ENCODE measurements at regions of chr19 and their contacts with region 1.

Region 1: GRCh38 chr19:51887522-51888498 is at the start of gene ZNF577:
- DNase-seq: peak; percentile 81 to 86
- ATAC-seq: peak; percentile 98
- H3K4me3 ChIP-seq: peak within 1 kb of the TSS; percentile 59 to 95 (median 84)
- H3K27ac ChIP-seq: peak within 1 kb of the TSS; percentile 70 to 87 (median 82)
- H3K4me1 ChIP-seq: peaks cover 4 to 9% of the 10 kb centered on the region in 2 donors
- H3K27me3 ChIP-seq: no peaks in the 10 kb centered on the region
- CTCF ChIP-seq: peak in 1 of 5 experiments; percentile 20
- POLR2A ChIP-seq: no peak
- total RNA-seq, gene ZNF577: 2.0 to 8.4 (median 4.5) TPM

Region 2: DNA sequence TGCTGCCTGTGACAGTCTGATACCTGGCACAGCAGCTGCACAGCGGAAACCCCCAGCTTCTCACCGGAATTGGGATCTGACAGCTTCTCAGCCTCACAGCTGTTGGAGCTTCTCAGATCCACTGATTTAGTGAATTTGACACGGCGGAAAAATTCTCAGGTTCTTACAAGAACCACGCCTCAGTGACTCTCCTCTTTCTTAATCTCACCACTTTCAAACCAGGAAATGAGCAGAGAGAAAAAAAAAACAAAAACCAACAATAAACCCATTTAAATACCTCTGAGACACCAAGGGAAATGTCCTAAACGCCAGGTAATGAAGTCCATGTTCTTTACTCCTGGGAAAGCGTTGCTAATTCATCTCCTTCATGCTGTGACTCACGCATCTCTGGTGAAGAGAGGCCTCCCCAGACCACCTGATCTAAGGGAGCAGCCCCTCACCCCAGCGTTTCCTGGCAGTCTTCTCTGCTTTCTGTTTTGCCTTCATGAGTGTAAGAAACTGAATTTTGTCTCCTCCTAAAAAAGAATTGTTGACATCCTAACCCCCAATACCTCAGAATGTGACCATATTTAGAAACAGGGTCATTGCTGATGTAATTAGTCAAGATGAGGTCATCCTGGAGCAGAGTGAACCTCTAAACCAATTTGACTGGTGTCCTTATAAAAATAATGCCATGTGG is 1708.8 kb before region 1 on chr19:
- in situ Hi-C with region 1: no loop called
- intact Hi-C with region 1: no loop called
- DNase-seq: no peak
- ATAC-seq: no peak
- H3K4me3 ChIP-seq: no peak overlapping the region
- H3K27ac ChIP-seq: no peak overlapping the region
- H3K4me1 ChIP-seq: no peaks in the 10 kb centered on the region
- H3K27me3 ChIP-seq: no peaks in the 10 kb centered on the region
- CTCF ChIP-seq: no peak
- POLR2A ChIP-seq: no peak

Region 3: GRCh38 chr19:51904331-51905165 is 16.7 kb after region 1 on chr19 and contains the start of gene ZNF649:
- in situ Hi-C with region 1: no loop called
- intact Hi-C with region 1: loop called (anchors 1 kb)
- DNase-seq: peak; percentile 59 to 79
- ATAC-seq: peak; percentile 99 to 100
- H3K4me3 ChIP-seq: peak within 1 kb of the TSS; percentile 71 to 86 (median 78)
- H3K27ac ChIP-seq: peak within 1 kb of the TSS; percentile 80 to 92 (median 85)
- H3K4me1 ChIP-seq: peaks cover 10 to 15% of the 10 kb centered on the region in 2 donors
- H3K27me3 ChIP-seq: peaks cover 0 to 9% (median 5%) of the 10 kb centered on the region in 3 donors
- CTCF ChIP-seq: no peak
- POLR2A ChIP-seq: no peak
- total RNA-seq, gene ZNF649: 2.6 to 4.7 (median 4.1) TPM

Region 4: DNA sequence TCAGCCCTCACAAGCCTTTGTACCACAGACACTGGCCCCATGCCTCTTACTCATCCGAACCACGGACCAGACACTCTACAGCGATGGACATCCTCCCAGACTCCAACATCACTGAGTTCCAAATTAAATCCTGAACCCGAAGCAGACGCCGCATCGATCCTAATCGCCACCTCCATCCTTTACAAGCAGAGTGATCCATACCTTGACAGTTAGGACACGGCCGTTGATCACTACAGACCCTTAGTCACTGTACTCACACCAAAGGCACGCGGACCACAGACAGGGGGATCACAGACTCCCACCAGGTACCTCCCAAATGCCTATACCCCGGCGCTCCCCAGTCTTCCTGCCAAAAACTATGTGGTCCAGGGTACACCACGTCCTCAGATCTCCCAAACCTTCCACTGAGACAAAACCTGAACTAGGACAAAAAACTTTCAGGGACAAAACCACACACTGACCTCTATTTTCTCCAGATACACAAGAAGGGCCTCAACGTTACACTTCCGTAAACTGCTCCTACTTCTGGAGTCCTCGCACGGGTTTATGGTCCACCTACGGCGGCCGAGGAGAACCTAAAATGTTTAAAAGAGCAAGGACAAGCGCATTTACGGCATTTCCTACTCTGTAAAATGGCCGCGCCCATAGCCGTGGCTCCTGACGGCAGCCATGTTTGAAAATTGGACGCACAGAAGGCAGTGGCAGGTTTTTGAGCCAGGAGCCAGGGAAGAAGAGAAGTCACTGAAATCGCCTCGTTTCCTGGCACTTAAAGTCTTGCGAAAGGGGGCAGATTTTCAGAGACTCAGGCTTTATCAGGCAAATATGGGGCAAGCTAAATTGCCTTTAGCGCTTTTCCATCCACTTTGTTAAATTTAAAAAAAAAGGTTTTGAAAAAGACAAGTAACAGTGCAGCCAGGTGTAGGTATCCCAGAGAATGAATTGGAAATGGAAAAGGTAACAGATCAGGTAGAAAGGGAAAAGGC is 98.8 kb after region 1 on chr19 and contains the start of gene ZNF350:
- in situ Hi-C with region 1: no loop called
- intact Hi-C with region 1: loop called (anchors 1 kb)
- DNase-seq: peak; percentile 87 to 91
- ATAC-seq: peak; percentile 100
- H3K4me3 ChIP-seq: peak within 1 kb of the TSS; percentile 69 to 92 (median 86)
- H3K27ac ChIP-seq: peak within 1 kb of the TSS; percentile 74 to 79 (median 77)
- H3K4me1 ChIP-seq: peaks cover 8 to 9% of the 10 kb centered on the region in 2 donors
- H3K27me3 ChIP-seq: no peaks in the 10 kb centered on the region
- CTCF ChIP-seq: no peak
- POLR2A ChIP-seq: peak in 1 of 2 donors; percentile 21
- total RNA-seq, gene ZNF350: 1.7 to 6.0 (median 5.0) TPM